ENCODE measurements at regions of chr18 and their contacts with region 1.

Region 1: GRCh38 chr18:12750076-12750714 is 47.4 kb downstream of the PSMG2 start:
- DNase-seq: peak; percentile 26
- H3K4me3 ChIP-seq: no peak overlapping the region
- H3K27ac ChIP-seq: no peak overlapping the region
- H3K4me1 ChIP-seq: peaks cover 16% of the 10 kb centered on the region
- H3K27me3 ChIP-seq: no peaks in the 10 kb centered on the region
- CTCF ChIP-seq: no peak

Region 2: DNA sequence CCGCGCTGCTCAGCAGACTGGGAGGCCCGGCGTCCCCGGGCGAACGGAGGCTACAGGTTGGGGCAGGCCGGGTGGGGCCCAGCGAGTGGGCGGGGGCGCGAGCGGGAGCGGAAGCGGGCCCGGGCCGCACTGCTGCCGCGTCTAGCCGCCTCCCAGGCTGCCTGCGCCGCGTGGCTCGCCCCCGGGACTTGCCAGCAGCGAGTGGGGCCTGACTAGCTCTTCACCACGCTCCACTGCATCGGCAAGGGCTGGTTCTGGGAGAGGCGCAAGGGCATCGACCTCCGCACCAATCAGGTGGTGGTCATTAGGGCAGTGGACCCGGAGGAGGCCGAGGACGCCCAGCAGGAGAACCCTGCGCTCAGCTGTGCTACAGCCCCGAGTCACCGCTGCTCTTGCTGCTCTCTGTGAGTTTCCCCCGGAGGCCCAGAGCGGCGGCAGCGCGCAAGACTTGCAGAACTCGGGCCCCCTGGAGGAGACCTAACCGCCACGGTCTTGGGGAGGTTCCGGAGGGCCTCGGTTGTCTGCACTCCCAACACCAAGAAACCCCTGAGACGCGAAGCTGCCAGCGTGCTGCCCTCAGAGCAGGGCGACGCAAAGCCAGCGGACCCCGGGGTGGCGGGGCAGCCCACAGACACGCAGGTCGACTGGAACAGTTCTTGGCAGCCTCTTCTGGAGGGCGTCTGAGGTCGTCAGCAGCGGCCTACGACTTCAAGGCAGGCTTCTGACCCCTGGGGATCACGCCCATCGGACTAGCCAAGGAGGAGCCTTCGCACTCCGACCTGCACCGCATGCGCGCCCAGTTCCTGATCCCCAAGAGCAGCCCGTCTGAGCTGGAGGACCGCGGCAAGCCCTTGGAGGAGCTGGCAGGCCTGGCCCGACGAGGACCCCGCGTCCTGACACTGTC is 161.1 kb after region 1 on chr18:
- CTCF ChIA-PET with region 1: no interaction called
- dilution Hi-C with region 1: no loop called
- in situ Hi-C with region 1: loop called in 1 of 2 experiments (anchors 10 kb)
- intact Hi-C with region 1: no loop called
- DNase-seq: no peak
- H3K4me3 ChIP-seq: no peak overlapping the region
- H3K27ac ChIP-seq: no peak overlapping the region
- H3K4me1 ChIP-seq: no peaks in the 10 kb centered on the region
- H3K27me3 ChIP-seq: no peaks in the 10 kb centered on the region
- CTCF ChIP-seq: no peak

Measured in mammary epithelial cell (primary cell).